CD4-positive, alpha-beta T cell (primary cell): ENCODE measurements at regions of chr2 and their contacts with region 1.

Region 1: GRCh38 chr2:172931918-172932520 is 143.6 kb upstream of the MAP3K20 start:
- DNase-seq: peak; percentile 32 to 80 (median 53)
- ATAC-seq: peak; percentile 65
- H3K4me3 ChIP-seq: no peak overlapping the region
- H3K4me3 Mint-ChIP-seq: no peak overlapping the region
- H3K27ac ChIP-seq: no peak overlapping the region
- H3K27ac Mint-ChIP-seq: no peak overlapping the region
- H3K4me1 ChIP-seq: peaks cover 6% of the 10 kb centered on the region
- H3K4me1 Mint-ChIP-seq: peaks cover 13% of the 10 kb centered on the region
- H3K27me3 ChIP-seq: peaks cover 0 to 19% of the 10 kb centered on the region in 2 experiments
- H3K27me3 Mint-ChIP-seq: peaks cover 4% of the 10 kb centered on the region
- CTCF ChIP-seq: peak; percentile 70

Region 2: GRCh38 chr2:171579481-171579880 is 1352.5 kb before region 1 on chr2:
- CTCF ChIA-PET with region 1: no interaction called
- POLR2A ChIA-PET with region 1: no interaction called
- intact Hi-C with region 1: loop called in 1 of 2 experiments (anchors 5 kb)
- DNase-seq: no peak
- ATAC-seq: no peak
- H3K4me3 ChIP-seq: no peak overlapping the region
- H3K4me3 Mint-ChIP-seq: no peak overlapping the region
- H3K27ac ChIP-seq: no peak overlapping the region
- H3K27ac Mint-ChIP-seq: no peak overlapping the region
- H3K4me1 ChIP-seq: no peaks in the 10 kb centered on the region
- H3K4me1 Mint-ChIP-seq: peaks cover under 1% of the 10 kb centered on the region
- H3K27me3 ChIP-seq: no peaks in the 10 kb centered on the region
- H3K27me3 Mint-ChIP-seq: peaks cover 7% of the 10 kb centered on the region
- CTCF ChIP-seq: no peak

Region 3: DNA sequence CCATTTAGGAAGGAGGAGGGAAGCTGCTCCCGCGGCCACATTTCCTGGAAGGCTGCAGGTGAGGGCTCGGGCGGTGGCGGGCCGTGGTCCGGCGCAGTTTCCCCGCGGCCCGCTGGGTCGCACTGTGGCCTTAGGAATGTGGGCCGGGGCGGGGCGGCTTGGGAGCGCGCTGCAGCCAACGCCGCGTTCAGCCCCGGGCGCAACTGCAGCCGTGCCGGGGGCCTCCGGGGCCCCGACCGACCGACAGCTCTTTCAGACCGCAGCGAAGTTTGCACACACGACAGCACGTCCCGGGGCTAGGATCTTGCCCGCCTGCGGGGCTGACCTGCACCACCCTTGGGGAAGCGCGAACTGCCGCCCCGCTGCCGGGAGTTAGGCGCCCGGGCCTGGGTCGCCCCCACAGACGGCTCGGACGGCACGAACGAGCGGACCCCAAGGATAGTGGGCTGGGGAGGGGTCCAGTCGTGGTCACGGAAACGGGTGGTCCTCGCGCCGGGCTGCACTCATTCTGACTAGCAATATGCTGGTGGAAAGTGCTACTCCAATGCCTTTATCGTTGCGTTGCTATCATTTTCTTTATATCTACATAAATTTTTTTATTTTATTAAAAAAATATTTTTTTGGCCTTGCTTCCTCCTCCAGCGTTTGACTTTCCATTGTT is 759.4 kb before region 1 on chr2:
- CTCF ChIA-PET with region 1: no interaction called
- POLR2A ChIA-PET with region 1: no interaction called
- intact Hi-C with region 1: loop called in 1 of 2 experiments (anchors 5 kb)
- DNase-seq: peak in 13 of 14 experiments; percentile 45 to 83 (median 60)
- ATAC-seq: peak; percentile 96
- H3K4me3 ChIP-seq: peak overlapping the region; percentile 59
- H3K4me3 Mint-ChIP-seq: peak overlapping the region; percentile 74
- H3K27ac ChIP-seq: no peak overlapping the region
- H3K27ac Mint-ChIP-seq: no peak overlapping the region
- H3K4me1 ChIP-seq: peaks cover 12% of the 10 kb centered on the region
- H3K4me1 Mint-ChIP-seq: no peaks in the 10 kb centered on the region
- H3K27me3 ChIP-seq: peaks cover 0 to 6% of the 10 kb centered on the region in 2 experiments
- H3K27me3 Mint-ChIP-seq: no peaks in the 10 kb centered on the region
- CTCF ChIP-seq: peak; percentile 64

Region 4: GRCh38 chr2:172806493-172806892 is 125.5 kb before region 1 on chr2:
- CTCF ChIA-PET with region 1: no interaction called
- POLR2A ChIA-PET with region 1: no interaction called
- intact Hi-C with region 1: loop called (anchors 1 to 2 kb)
- DNase-seq: peak in 4 of 14 experiments; percentile 5 to 35 (median 24)
- ATAC-seq: no peak
- H3K4me3 ChIP-seq: no peak overlapping the region
- H3K4me3 Mint-ChIP-seq: no peak overlapping the region
- H3K27ac ChIP-seq: no peak overlapping the region
- H3K27ac Mint-ChIP-seq: no peak overlapping the region
- H3K4me1 ChIP-seq: peaks cover 3% of the 10 kb centered on the region
- H3K4me1 Mint-ChIP-seq: peaks cover 7% of the 10 kb centered on the region
- H3K27me3 ChIP-seq: no peaks in the 10 kb centered on the region
- H3K27me3 Mint-ChIP-seq: peaks cover 5% of the 10 kb centered on the region
- CTCF ChIP-seq: peak; percentile 84

Region 5: DNA sequence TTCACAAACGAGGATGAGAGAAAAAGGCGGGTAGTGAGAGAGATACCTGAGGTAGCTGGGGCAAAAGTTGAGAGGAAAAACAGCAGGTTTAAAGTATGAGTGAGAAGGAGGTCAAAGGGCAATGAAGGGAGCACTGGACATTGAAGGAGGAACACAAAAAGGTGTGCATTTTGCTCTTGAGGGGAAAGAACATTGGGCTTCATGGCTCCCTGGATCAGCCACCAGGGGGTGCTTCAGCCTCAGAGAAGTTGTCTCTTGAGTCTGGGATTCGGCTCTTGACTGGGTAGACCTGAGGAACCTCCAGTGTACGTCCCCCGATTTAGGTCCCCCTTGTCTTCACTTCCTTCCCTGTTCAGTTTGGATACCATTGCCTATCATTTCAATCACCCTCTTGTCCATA is 67.8 kb before region 1 on chr2:
- CTCF ChIA-PET with region 1: no interaction called
- POLR2A ChIA-PET with region 1: no interaction called
- intact Hi-C with region 1: loop called (anchors 1 kb)
- DNase-seq: peak in 13 of 14 experiments; percentile 3 to 65 (median 15)
- ATAC-seq: no peak
- H3K4me3 ChIP-seq: no peak overlapping the region
- H3K4me3 Mint-ChIP-seq: no peak overlapping the region
- H3K27ac ChIP-seq: no peak overlapping the region
- H3K27ac Mint-ChIP-seq: no peak overlapping the region
- H3K4me1 ChIP-seq: no peaks in the 10 kb centered on the region
- H3K4me1 Mint-ChIP-seq: no peaks in the 10 kb centered on the region
- H3K27me3 ChIP-seq: peaks cover 0 to 3% of the 10 kb centered on the region in 2 experiments
- H3K27me3 Mint-ChIP-seq: peaks cover 23% of the 10 kb centered on the region
- CTCF ChIP-seq: peak; percentile 46

Region 6: DNA sequence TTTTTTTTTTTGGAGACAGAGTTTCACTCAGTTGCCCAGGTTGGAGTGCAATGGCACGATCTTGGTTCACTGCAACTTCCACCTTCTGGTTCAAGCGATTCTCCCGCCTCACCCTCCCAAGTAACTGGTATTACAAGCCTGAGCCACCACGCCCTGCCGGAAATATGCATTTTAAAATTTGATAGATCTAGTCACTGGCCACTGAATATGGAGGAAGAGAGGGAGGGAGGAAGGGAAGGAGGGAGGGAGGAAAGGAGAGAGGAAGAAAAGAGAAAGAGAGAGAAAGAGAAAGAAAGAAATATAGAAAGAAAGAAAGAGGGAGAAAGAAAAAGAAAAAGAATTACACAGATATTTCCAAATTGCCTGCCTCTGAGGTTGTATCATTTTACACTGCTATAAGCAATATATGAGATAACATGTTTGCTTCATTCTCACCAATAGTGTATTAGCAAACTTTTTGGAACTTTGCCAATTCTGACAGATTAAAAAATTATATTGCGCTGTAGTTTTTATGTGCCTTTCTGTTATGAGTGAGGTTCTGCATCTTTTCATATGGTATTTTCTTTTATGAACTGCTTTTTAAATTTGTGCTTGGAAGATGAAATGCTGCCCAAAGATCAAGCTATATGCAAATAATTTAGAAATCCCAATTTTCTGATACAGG is 17.5 kb before region 1 on chr2:
- CTCF ChIA-PET with region 1: interaction called, 3 read pairs
- POLR2A ChIA-PET with region 1: no interaction called
- intact Hi-C with region 1: loop called in 1 of 2 experiments (anchors 1 kb)
- DNase-seq: no peak
- ATAC-seq: no peak
- H3K4me3 ChIP-seq: no peak overlapping the region
- H3K4me3 Mint-ChIP-seq: no peak overlapping the region
- H3K27ac ChIP-seq: no peak overlapping the region
- H3K27ac Mint-ChIP-seq: no peak overlapping the region
- H3K4me1 ChIP-seq: peaks cover 8% of the 10 kb centered on the region
- H3K4me1 Mint-ChIP-seq: peaks cover 29% of the 10 kb centered on the region
- H3K27me3 ChIP-seq: no peaks in the 10 kb centered on the region
- H3K27me3 Mint-ChIP-seq: no peaks in the 10 kb centered on the region
- CTCF ChIP-seq: no peak